ENCODE measurements at regions of chr19 and their contacts with region 1.

Region 1: GRCh38 chr19:15249972-15250639 is 17.9 kb upstream of the EPHX3 start:
- DNase-seq: no peak
- ATAC-seq: no peak
- H3K4me3 ChIP-seq: no peak overlapping the region
- H3K4me3 Mint-ChIP-seq: no peak overlapping the region
- H3K27ac ChIP-seq: no peak overlapping the region
- H3K27ac Mint-ChIP-seq: no peak overlapping the region
- H3K4me1 ChIP-seq: peaks cover 0 to 3% of the 10 kb centered on the region in 2 experiments
- H3K4me1 Mint-ChIP-seq: peaks cover 0 to 8% (median 0%) of the 10 kb centered on the region in 3 donors
- H3K27me3 ChIP-seq: no peaks in the 10 kb centered on the region
- H3K27me3 Mint-ChIP-seq: no peaks in the 10 kb centered on the region

Region 2: DNA sequence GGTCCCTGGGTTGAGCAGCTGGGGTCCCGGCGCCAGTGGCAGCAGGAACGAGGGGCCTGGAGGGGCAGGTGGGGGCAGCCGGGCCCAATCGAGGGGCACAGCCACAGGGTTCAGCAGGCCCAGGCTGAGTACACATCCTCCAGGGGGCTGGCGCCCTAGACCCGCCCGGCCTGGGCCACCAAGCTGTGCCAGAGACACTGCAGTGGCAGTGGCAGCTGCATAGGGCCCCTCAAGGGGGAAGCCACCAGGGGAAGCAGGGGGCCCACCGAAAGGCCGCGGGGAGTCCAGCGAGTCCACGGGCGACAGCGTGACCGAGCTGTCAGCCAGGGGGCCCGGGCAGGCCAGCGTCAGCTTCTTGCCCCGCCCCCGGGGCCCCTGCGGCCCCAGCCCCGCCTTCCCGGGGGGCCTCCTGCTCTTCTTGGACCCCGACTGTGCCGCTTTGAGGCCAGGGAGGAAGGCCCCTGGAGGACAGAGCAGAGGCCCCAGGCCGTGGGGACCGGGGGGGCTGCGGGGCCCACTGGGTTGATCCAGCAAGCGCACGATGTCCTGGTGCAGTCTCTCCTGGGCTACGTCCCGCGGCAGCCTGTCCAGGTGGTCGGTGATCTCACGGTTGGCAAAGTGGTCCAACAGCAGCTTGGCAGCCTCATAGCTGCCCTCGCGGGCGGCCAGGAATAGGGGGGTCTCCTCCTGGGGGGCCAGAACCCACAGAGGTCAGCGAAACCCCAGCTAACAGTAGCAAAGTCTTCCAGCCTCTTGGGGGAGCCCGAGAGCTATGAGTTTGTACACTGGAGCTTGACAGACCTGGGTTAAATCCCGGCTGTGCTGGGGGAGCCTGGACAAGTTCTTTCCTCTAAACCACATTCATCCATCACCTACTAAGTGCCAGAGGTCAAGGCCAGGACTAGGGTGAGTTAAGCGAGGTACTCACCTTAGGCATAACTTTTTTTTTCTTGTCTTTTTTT is 88.8 kb before region 1 on chr19:
- CTCF ChIA-PET with region 1: no interaction called
- POLR2A ChIA-PET with region 1: no interaction called
- DNase-seq: peak in 1 of 35 experiments; percentile 20
- ATAC-seq: no peak
- H3K4me3 ChIP-seq: no peak overlapping the region
- H3K4me3 Mint-ChIP-seq: no peak overlapping the region
- H3K27ac ChIP-seq: no peak overlapping the region
- H3K27ac Mint-ChIP-seq: no peak overlapping the region
- H3K4me1 ChIP-seq: no peaks in the 10 kb centered on the region
- H3K4me1 Mint-ChIP-seq: no peaks in the 10 kb centered on the region
- H3K27me3 ChIP-seq: peaks cover 0 to 22% of the 10 kb centered on the region in 2 experiments
- H3K27me3 Mint-ChIP-seq: peaks cover 3% of the 10 kb centered on the region in 2 donors

Region 3: DNA sequence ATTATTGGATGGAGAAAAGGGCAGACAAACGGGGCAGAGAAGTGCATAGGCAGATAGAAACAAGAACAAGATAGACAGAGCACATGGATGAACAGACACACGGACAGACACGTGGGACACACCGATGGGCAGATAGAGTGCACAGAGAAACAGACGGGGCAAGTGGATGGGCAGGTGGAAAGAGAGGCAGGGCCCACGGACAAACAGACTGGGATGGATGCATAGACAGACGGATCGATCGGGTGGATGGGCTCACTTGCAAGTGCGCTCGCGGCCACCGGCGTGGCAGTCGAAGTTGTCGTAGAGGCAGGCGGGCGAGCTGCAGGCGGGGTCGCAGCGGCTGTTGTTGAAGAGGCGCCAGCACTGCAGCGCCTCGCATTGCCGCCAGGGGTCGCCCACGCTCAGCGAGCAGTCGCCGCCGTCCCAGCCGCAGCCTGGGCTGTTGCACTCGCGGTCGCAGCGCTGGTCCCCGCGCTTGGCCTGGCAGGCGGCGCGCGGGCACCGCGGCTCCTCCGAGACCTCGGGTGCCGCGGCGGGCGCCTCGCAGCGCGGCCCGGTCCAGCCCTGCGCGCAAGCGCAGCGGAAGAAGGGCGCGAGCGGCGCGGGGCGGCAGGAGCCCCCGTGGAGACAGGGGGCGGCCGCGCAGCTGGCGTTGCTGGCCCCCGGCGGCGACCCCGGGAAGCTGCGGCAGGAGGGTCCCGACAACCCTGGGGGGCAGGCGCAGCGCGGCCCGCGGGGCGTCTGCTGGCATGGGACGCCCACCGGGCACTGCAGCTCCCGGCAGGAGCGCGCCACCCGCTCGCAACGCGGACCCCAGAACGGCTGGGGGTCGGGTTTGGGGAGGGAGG is 72.6 kb before region 1 on chr19:
- CTCF ChIA-PET with region 1: interaction called in 1 of 2 experiments, 16 read pairs
- POLR2A ChIA-PET with region 1: no interaction called
- DNase-seq: peak; percentile 60 to 92 (median 76)
- ATAC-seq: peak; percentile 96 to 98 (median 96)
- H3K4me3 ChIP-seq: peak overlapping the region in 1 of 2 donors; percentile 32
- H3K4me3 Mint-ChIP-seq: peak overlapping the region; percentile 7 to 69 (median 53)
- H3K27ac ChIP-seq: no peak overlapping the region
- H3K27ac Mint-ChIP-seq: no peak overlapping the region
- H3K4me1 ChIP-seq: peaks cover 0 to 10% of the 10 kb centered on the region in 2 experiments
- H3K4me1 Mint-ChIP-seq: peaks cover 4 to 6% (median 5%) of the 10 kb centered on the region in 3 donors
- H3K27me3 ChIP-seq: peaks cover 0 to 39% of the 10 kb centered on the region in 2 experiments
- H3K27me3 Mint-ChIP-seq: peaks cover 19 to 21% of the 10 kb centered on the region in 2 donors

Region 4: DNA sequence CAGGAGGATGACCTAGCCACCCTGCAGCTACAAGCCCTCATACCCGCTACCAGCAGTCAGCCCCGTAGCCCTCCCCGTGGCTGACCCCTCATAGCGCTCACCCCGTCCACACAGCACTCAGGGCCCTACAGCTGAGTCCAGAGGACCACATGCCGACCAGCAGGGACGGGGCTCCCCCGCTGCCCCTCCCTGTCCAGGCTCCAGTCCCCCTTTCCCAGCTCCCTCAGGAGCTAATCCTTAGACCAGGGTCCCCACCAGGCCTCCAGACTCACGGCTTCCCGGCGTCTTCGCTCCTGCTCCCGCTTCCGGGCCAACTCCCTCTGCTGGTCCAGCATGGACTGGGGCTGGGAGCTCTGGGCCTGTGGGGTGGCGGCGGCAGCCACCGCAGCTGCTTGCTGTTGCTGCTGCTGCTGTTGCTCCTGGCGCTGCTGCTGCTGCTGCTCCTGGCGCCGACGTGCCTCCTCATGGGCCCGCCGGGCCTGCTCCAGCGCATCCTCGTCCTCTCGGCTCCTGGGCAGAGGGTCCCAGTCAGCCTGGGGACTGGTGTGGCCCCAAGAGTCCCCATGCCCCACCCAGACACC is 11.5 kb before region 1 on chr19:
- CTCF ChIA-PET with region 1: no interaction called
- POLR2A ChIA-PET with region 1: no interaction called
- DNase-seq: no peak
- ATAC-seq: no peak
- H3K4me3 ChIP-seq: no peak overlapping the region
- H3K4me3 Mint-ChIP-seq: no peak overlapping the region
- H3K27ac ChIP-seq: no peak overlapping the region
- H3K27ac Mint-ChIP-seq: no peak overlapping the region
- H3K4me1 ChIP-seq: peaks cover 0 to under 1% of the 10 kb centered on the region in 2 experiments
- H3K4me1 Mint-ChIP-seq: peaks cover 1 to 8% (median 6%) of the 10 kb centered on the region in 3 donors
- H3K27me3 ChIP-seq: peaks cover 0 to 1% of the 10 kb centered on the region in 2 experiments
- H3K27me3 Mint-ChIP-seq: peaks cover 4 to 6% of the 10 kb centered on the region in 2 donors

Measured in T-cell (primary cell).